ENCODE measurements at regions of chr21 and their contacts with region 1.

Region 1: DNA sequence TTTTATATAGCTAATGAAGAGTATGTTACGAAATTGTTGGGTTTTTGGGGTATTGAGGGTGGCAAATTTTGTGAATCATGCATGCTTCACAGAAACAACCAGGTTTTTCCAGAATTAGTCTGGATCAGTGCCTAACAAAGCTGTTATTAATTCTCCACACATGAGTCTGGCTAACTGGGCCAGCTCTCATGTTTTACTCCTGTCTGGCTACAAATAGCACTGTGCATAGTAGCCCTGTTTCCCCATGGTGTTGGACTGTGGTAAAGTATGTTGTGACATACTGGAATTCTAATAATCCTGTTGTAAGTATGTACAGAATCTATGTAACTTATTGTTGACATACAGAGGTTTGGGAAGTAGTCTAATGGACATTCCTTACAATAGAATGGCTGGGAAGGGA is 35.8 kb downstream of the S100B start:
- DNase-seq: no peak
- ATAC-seq: no peak
- H3K4me3 ChIP-seq: no peak overlapping the region
- H3K4me3 Mint-ChIP-seq: peak overlapping the region in 1 of 10 donors; percentile 71
- H3K27ac ChIP-seq: no peak overlapping the region
- H3K27ac Mint-ChIP-seq: peak overlapping the region in 6 of 9 donors; percentile 14 to 96 (median 52)
- H3K4me1 ChIP-seq: peaks cover 0 to 17% of the 10 kb centered on the region in 2 donors
- H3K4me1 Mint-ChIP-seq: peaks cover 10 to 78% (median 61%) of the 10 kb centered on the region in 7 donors
- H3K27me3 ChIP-seq: no peaks in the 10 kb centered on the region
- H3K27me3 Mint-ChIP-seq: no peaks in the 10 kb centered on the region

Region 2: DNA sequence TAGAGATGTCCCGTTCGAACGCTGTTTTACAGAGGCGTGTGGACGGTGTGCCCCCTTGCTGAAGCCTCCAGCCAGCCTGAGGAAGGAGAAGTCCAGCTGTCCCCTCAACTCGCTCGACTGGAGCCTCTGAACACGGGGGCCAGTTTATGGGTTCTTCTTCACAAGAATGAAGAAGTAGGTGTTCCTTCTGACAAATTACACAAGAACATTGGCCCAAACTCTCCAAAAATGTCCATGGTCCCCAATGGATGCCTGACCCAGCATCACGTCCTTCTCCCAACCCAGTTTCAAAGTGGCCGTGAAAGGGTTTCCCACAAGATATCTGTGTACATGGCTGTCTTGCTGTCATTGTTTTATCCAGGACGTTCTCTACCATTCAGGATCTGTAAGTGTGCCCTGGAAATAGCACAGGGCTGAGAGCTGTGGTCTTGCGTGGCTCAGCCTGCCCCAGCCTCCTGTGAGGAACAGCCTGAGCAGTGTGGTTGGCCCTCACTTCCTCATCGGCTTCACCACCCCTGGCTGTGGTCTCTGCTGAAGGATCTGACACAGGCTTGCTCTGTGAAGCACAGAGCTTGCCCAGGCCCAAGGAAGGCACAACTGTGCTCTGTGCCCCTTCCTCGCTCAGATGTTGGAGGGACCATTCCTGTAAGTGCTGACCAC is 36.8 kb after region 1 on chr21:
- CTCF ChIA-PET with region 1: no interaction called
- POLR2A ChIA-PET with region 1: interaction called, 3 read pairs
- intact Hi-C with region 1: loop called in 1 of 2 experiments (anchors 5 kb)
- DNase-seq: peak in 8 of 9 donors; percentile 20 to 54 (median 43)
- ATAC-seq: peak; percentile 97
- H3K4me3 ChIP-seq: peak overlapping the region; percentile 22
- H3K4me3 Mint-ChIP-seq: peak overlapping the region; percentile 64 to 88 (median 73)
- H3K27ac ChIP-seq: peak overlapping the region; percentile 53
- H3K27ac Mint-ChIP-seq: peak overlapping the region; percentile 56 to 94 (median 89)
- H3K4me1 ChIP-seq: peaks cover 25 to 34% of the 10 kb centered on the region in 2 donors
- H3K4me1 Mint-ChIP-seq: peaks cover 28 to 82% (median 64%) of the 10 kb centered on the region in 7 donors
- H3K27me3 ChIP-seq: no peaks in the 10 kb centered on the region
- H3K27me3 Mint-ChIP-seq: peaks cover 0 to 1% (median 0%) of the 10 kb centered on the region in 5 donors

Measured in naive thymus-derived CD4-positive, alpha-beta T cell (primary cell).